ENCODE measurements at regions of chr14 and their contacts with region 1.

Region 1: DNA sequence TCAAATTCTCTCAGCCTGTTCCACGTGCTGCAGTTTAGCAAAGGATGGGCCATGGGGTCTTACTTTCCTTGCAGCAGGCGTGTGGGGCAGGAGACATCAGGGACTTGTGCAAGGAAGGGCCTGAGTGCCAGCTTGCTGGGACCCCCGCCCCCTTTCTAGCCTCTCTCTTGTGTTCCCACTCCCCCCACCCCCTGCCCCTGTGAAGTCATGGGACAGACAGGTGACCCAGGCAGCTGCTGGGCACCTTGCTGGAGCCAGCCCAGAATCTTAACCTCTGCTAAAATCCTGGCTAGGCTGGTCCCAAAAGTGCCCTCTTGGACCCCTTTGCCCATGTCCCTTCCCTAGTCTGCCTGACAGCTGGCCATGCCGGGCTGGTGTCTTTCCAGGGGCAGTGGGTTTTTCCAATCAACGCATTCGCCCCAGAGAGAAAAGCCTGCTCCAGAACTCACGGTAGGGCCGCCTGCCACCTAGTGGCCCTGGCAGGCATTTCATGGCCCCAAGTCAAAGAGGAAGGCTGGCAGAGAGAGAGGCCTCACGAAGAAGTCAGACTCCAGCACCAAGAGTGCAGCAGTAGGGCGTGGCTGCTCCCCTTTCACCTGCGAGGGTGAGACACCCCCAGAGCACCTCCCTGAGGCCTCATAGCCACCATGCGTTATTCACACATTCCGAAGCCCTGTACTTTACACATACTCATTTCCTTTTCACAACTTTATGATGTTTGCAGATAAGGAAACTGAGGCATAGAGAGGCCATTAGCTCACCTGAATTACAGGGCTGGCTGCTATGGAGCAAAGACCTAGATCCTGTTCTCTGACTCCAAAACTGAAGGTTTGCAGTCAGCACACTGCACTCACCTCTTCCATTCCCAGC is 67.4 kb downstream of the LGMN start:
- DNase-seq: peak; percentile 68 to 74 (median 72)
- H3K4me3 ChIP-seq: no peak overlapping the region
- H3K4me3 Mint-ChIP-seq: peak overlapping the region in 3 of 8 donors; percentile 13 to 59 (median 43)
- H3K27ac ChIP-seq: peak overlapping the region; percentile 23
- H3K27ac Mint-ChIP-seq: peak overlapping the region; percentile 81 to 90 (median 88)
- H3K4me1 ChIP-seq: peaks cover 27% of the 10 kb centered on the region
- H3K4me1 Mint-ChIP-seq: peaks cover 14 to 35% (median 25%) of the 10 kb centered on the region in 4 donors
- H3K27me3 ChIP-seq: no peaks in the 10 kb centered on the region
- H3K27me3 Mint-ChIP-seq: no peaks in the 10 kb centered on the region

Region 2: DNA sequence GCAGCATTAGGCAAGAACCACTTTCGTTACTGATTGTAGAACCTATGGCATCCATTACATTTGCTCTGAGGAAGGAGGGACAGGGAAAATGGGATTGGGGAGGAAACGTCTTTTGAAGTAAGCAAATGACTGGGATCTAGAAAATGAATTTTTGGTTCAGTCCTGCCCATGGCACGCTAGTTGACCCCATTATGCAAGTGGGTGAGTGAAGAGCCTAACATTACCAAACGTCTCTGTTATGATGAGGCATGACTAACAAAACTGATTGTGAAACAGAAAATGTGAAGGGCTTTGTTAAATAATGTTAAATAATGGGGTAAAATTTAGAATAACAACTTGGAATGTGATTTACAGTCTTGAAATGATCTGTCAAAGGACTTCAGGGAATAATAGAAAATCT is 520.4 kb before region 1 on chr14:
- CTCF ChIA-PET with region 1: no interaction called
- POLR2A ChIA-PET with region 1: no interaction called
- intact Hi-C with region 1: loop called (anchors 5 kb)
- DNase-seq: no peak
- H3K4me3 ChIP-seq: no peak overlapping the region
- H3K4me3 Mint-ChIP-seq: no peak overlapping the region
- H3K27ac ChIP-seq: no peak overlapping the region
- H3K27ac Mint-ChIP-seq: peak overlapping the region in 1 of 7 donors; percentile 39
- H3K4me1 ChIP-seq: no peaks in the 10 kb centered on the region
- H3K4me1 Mint-ChIP-seq: peaks cover 0 to 4% (median 1%) of the 10 kb centered on the region in 4 donors
- H3K27me3 ChIP-seq: no peaks in the 10 kb centered on the region
- H3K27me3 Mint-ChIP-seq: no peaks in the 10 kb centered on the region

Region 3: GRCh38 chr14:92551044-92551841 is 129.8 kb before region 1 on chr14:
- CTCF ChIA-PET with region 1: interaction called, 8 read pairs
- POLR2A ChIA-PET with region 1: no interaction called
- intact Hi-C with region 1: loop called (anchors 1 kb)
- DNase-seq: peak in 3 of 5 donors; percentile 18 to 28 (median 23)
- H3K4me3 ChIP-seq: no peak overlapping the region
- H3K4me3 Mint-ChIP-seq: no peak overlapping the region
- H3K27ac ChIP-seq: no peak overlapping the region
- H3K27ac Mint-ChIP-seq: peak overlapping the region in 1 of 7 donors; percentile 12
- H3K4me1 ChIP-seq: peaks cover 25% of the 10 kb centered on the region
- H3K4me1 Mint-ChIP-seq: peaks cover 15 to 37% (median 23%) of the 10 kb centered on the region in 4 donors
- H3K27me3 ChIP-seq: no peaks in the 10 kb centered on the region
- H3K27me3 Mint-ChIP-seq: no peaks in the 10 kb centered on the region

Region 4: GRCh38 chr14:92612988-92613658 is 67.9 kb before region 1 on chr14:
- CTCF ChIA-PET with region 1: interaction called, 59 read pairs
- POLR2A ChIA-PET with region 1: interaction called, 17 read pairs
- intact Hi-C with region 1: loop called (anchors 1 kb)
- DNase-seq: peak; percentile 50 to 62 (median 55)
- H3K4me3 ChIP-seq: no peak overlapping the region
- H3K4me3 Mint-ChIP-seq: peak overlapping the region in 2 of 8 donors; percentile 15 to 33
- H3K27ac ChIP-seq: no peak overlapping the region
- H3K27ac Mint-ChIP-seq: peak overlapping the region; percentile 22 to 91 (median 63)
- H3K4me1 ChIP-seq: peaks cover 52% of the 10 kb centered on the region
- H3K4me1 Mint-ChIP-seq: peaks cover 32 to 72% (median 52%) of the 10 kb centered on the region in 4 donors
- H3K27me3 ChIP-seq: no peaks in the 10 kb centered on the region
- H3K27me3 Mint-ChIP-seq: no peaks in the 10 kb centered on the region

Region 5: DNA sequence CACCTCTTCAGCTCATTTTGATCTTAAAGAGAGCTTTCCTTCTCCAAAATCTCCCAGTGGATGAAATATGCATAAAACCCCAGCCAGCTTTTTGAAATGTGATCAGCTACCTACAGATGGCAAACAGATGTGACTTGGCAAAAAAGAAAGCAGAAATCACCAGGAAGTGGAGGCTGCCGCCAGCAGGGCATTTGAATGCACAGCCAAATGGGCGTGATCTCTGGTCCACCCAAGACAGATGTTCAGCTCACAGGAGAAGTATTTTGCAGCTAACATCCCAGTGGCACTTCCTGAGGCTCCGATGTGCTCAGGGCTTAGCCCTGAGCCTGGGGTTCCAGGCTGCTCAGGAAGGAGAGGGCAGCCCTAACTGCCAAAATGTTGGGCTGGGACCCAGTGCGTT is 10.9 kb before region 1 on chr14:
- CTCF ChIA-PET with region 1: interaction called, 13 read pairs
- POLR2A ChIA-PET with region 1: no interaction called
- intact Hi-C with region 1: no loop called
- DNase-seq: no peak
- H3K4me3 ChIP-seq: no peak overlapping the region
- H3K4me3 Mint-ChIP-seq: peak overlapping the region in 1 of 8 donors; percentile 32
- H3K27ac ChIP-seq: no peak overlapping the region
- H3K27ac Mint-ChIP-seq: peak overlapping the region in 6 of 7 donors; percentile 47 to 91 (median 82)
- H3K4me1 ChIP-seq: peaks cover 51% of the 10 kb centered on the region
- H3K4me1 Mint-ChIP-seq: peaks cover 20 to 81% (median 51%) of the 10 kb centered on the region in 4 donors
- H3K27me3 ChIP-seq: no peaks in the 10 kb centered on the region
- H3K27me3 Mint-ChIP-seq: no peaks in the 10 kb centered on the region

Measured in CD4-positive, alpha-beta memory T cell (primary cell).